IMR-90 (cell line): ENCODE measurements at regions of chr11 and their contacts with region 1.

Region 1: DNA sequence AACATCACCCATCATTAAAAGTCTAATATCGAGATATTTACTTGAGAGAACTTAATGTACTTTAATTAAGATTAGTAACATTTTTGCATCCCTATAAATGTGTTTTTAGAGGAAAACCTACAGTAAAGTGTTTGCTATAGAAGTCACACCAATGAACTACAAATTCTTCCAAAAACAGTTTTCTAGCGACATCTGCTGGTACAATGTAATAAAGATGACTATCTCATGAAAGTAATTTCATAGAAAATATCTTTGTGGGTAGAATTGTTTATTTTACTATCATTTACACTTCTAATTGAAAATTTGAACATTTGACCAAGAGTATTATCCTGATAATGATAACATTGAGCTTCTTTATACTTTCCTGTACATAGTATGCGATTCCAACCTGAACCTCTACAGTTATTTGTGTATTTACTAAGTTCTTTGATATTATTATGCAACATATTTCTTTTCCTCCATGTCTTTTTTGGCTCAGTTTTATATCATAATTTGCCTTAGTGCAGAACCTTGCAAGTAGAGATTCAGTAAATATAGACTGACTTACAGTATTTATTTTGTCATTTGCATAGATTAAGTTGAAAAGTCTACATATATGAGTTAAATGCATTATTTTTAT is 252.7 kb downstream of the TMEM135 start:
- DNase-seq: peak; percentile 64
- ATAC-seq: peak; percentile 63
- H3K4me3 ChIP-seq: no peak overlapping the region
- H3K27ac ChIP-seq: no peak overlapping the region
- H3K4me1 ChIP-seq: no peaks in the 10 kb centered on the region
- H3K27me3 ChIP-seq: no peaks in the 10 kb centered on the region
- CTCF ChIP-seq: peak; percentile 80
- POLR2A ChIP-seq: no peak
- RAD21 ChIP-seq: peak; percentile 82

Region 2: GRCh38 chr11:86440305-86440716 is 850.1 kb before region 1 on chr11:
- CTCF ChIA-PET with region 1: no interaction called
- POLR2A ChIA-PET with region 1: no interaction called
- dilution Hi-C with region 1: no loop called
- in situ Hi-C with region 1: loop called (anchors 25 kb)
- intact Hi-C with region 1: no loop called
- DNase-seq: peak; percentile 55
- ATAC-seq: peak; percentile 75
- H3K4me3 ChIP-seq: no peak overlapping the region
- H3K27ac ChIP-seq: no peak overlapping the region
- H3K4me1 ChIP-seq: peaks cover 10% of the 10 kb centered on the region; the same call in 1 of the 2 replicates
- H3K27me3 ChIP-seq: no peaks in the 10 kb centered on the region
- CTCF ChIP-seq: no peak
- POLR2A ChIP-seq: no peak
- RAD21 ChIP-seq: no peak

Region 3: DNA sequence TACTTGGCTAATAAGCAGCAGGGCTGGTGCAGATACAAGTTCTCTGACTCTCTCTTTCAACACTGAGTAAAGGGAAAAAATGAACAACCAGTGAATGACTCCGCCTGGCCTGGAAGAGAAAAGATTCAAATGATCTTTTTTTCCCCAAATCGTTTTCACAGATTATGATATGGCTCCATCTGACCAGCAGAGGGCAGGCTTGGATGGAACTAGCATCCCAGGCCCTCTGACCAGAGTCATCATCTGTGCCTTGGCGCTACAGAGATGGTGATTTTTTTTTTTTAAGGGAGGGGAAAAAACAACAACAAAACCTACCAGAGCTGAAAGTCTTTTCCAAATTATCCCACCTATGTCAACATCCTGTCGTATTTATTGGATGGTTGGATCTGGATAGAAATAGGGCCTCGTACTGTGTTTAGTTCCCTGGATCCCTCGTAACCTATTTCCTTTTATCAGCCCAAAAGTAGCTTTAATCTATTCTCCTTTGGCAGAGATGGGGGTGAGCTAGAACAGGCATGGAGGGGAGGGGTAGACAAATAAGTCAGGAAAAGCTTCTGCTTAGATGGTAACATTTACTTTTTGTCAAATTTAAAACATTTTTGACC is 420.3 kb before region 1 on chr11:
- CTCF ChIA-PET with region 1: no interaction called
- POLR2A ChIA-PET with region 1: no interaction called
- dilution Hi-C with region 1: no loop called
- in situ Hi-C with region 1: loop called (anchors 10 kb)
- intact Hi-C with region 1: loop called (anchors 2 kb)
- DNase-seq: peak; percentile 63
- ATAC-seq: peak; percentile 90
- H3K4me3 ChIP-seq: no peak overlapping the region
- H3K27ac ChIP-seq: no peak overlapping the region
- H3K4me1 ChIP-seq: peaks cover 3% of the 10 kb centered on the region; the same call in 1 of the 2 replicates
- H3K27me3 ChIP-seq: no peaks in the 10 kb centered on the region; the same call in 1 of the 2 replicates
- CTCF ChIP-seq: peak; percentile 86
- POLR2A ChIP-seq: peak; percentile 28; the same call in 1 of the 2 replicates
- RAD21 ChIP-seq: peak; percentile 92

Region 4: GRCh38 chr11:86978756-86979608 is 311.4 kb before region 1 on chr11:
- CTCF ChIA-PET with region 1: no interaction called
- POLR2A ChIA-PET with region 1: no interaction called
- dilution Hi-C with region 1: no loop called
- in situ Hi-C with region 1: no loop called
- intact Hi-C with region 1: loop called (anchors 1 kb)
- DNase-seq: peak; percentile 65
- ATAC-seq: peak; percentile 87
- H3K4me3 ChIP-seq: no peak overlapping the region
- H3K27ac ChIP-seq: no peak overlapping the region
- H3K4me1 ChIP-seq: no peaks in the 10 kb centered on the region
- H3K27me3 ChIP-seq: peaks cover 4% of the 10 kb centered on the region
- CTCF ChIP-seq: peak; percentile 70
- POLR2A ChIP-seq: no peak
- RAD21 ChIP-seq: peak; percentile 60

Region 5: GRCh38 chr11:87097582-87097981 is 192.8 kb before region 1 on chr11:
- CTCF ChIA-PET with region 1: no interaction called
- POLR2A ChIA-PET with region 1: no interaction called
- dilution Hi-C with region 1: no loop called
- in situ Hi-C with region 1: no loop called
- intact Hi-C with region 1: loop called (anchors 5 kb)
- DNase-seq: peak; percentile 27
- ATAC-seq: peak; percentile 80
- H3K4me3 ChIP-seq: peak overlapping the region; percentile 7; the same call in 1 of the 2 replicates
- H3K27ac ChIP-seq: no peak overlapping the region
- H3K4me1 ChIP-seq: no peaks in the 10 kb centered on the region
- H3K27me3 ChIP-seq: no peaks in the 10 kb centered on the region
- CTCF ChIP-seq: peak; percentile 38
- POLR2A ChIP-seq: no peak
- RAD21 ChIP-seq: peak; percentile 40

Region 6: GRCh38 chr11:87942786-87943185 is 652.4 kb after region 1 on chr11:
- CTCF ChIA-PET with region 1: no interaction called
- POLR2A ChIA-PET with region 1: no interaction called
- dilution Hi-C with region 1: no loop called
- in situ Hi-C with region 1: no loop called
- intact Hi-C with region 1: no loop called
- DNase-seq: no peak
- ATAC-seq: no peak
- H3K4me3 ChIP-seq: no peak overlapping the region
- H3K27ac ChIP-seq: no peak overlapping the region
- H3K4me1 ChIP-seq: no peaks in the 10 kb centered on the region
- H3K27me3 ChIP-seq: no peaks in the 10 kb centered on the region
- CTCF ChIP-seq: no peak
- POLR2A ChIP-seq: no peak
- RAD21 ChIP-seq: no peak